CD4-positive, alpha-beta T cell (primary cell): ENCODE measurements at regions of chr1 and their contacts with region 1.

Region 1: GRCh38 chr1:53350853-53351767 is 23.2 kb upstream of the LRP8 start:
- DNase-seq: no peak
- ATAC-seq: no peak
- H3K4me3 ChIP-seq: no peak overlapping the region
- H3K4me3 Mint-ChIP-seq: no peak overlapping the region
- H3K27ac ChIP-seq: no peak overlapping the region
- H3K27ac Mint-ChIP-seq: no peak overlapping the region
- H3K4me1 ChIP-seq: no peaks in the 10 kb centered on the region
- H3K4me1 Mint-ChIP-seq: no peaks in the 10 kb centered on the region
- H3K27me3 ChIP-seq: no peaks in the 10 kb centered on the region
- H3K27me3 Mint-ChIP-seq: no peaks in the 10 kb centered on the region
- CTCF ChIP-seq: no peak

Region 2: GRCh38 chr1:53014791-53015507 is 336.2 kb before region 1 on chr1:
- CTCF ChIA-PET with region 1: no interaction called
- POLR2A ChIA-PET with region 1: no interaction called
- intact Hi-C with region 1: no loop called
- DNase-seq: peak; percentile 62 to 95 (median 69)
- ATAC-seq: peak; percentile 100
- H3K4me3 ChIP-seq: peak overlapping the region; percentile 58
- H3K4me3 Mint-ChIP-seq: peak overlapping the region; percentile 88
- H3K27ac ChIP-seq: no peak overlapping the region
- H3K27ac Mint-ChIP-seq: peak overlapping the region; percentile 41
- H3K4me1 ChIP-seq: peaks cover 9% of the 10 kb centered on the region
- H3K4me1 Mint-ChIP-seq: peaks cover 38% of the 10 kb centered on the region
- H3K27me3 ChIP-seq: no peaks in the 10 kb centered on the region
- H3K27me3 Mint-ChIP-seq: no peaks in the 10 kb centered on the region
- CTCF ChIP-seq: no peak

Region 3: GRCh38 chr1:53303726-53304515 is 47.2 kb before region 1 on chr1:
- CTCF ChIA-PET with region 1: no interaction called
- POLR2A ChIA-PET with region 1: no interaction called
- intact Hi-C with region 1: loop called in 1 of 2 experiments (anchors 1 kb)
- DNase-seq: no peak
- ATAC-seq: no peak
- H3K4me3 ChIP-seq: no peak overlapping the region
- H3K4me3 Mint-ChIP-seq: no peak overlapping the region
- H3K27ac ChIP-seq: no peak overlapping the region
- H3K27ac Mint-ChIP-seq: no peak overlapping the region
- H3K4me1 ChIP-seq: no peaks in the 10 kb centered on the region
- H3K4me1 Mint-ChIP-seq: peaks cover 11% of the 10 kb centered on the region
- H3K27me3 ChIP-seq: no peaks in the 10 kb centered on the region
- H3K27me3 Mint-ChIP-seq: no peaks in the 10 kb centered on the region
- CTCF ChIP-seq: no peak